Prostate gland (tissue), 2 donors: ENCODE measurements at regions of chr12 and their contacts with region 1.

Region 1: DNA sequence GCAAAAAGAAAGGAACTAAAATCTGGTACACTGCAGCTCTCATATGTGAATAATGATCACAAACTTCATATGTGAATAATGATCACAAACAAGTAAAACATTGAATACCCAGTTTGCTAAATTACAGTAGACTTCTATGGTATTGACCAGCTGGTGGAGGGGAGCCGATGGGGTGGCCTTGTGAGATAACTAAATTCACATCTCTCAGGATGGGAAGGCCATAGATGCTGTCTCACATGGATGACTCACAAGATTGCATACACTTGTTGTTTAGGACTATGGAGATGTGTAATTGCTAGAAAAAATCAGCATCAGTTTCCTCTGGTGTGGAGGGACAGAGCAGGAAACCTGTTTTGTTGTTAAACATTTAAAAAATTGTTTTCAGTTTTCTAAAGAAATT is 49.2 kb downstream of the ACACB start:
- DNase-seq: no peak
- H3K4me3 ChIP-seq: no peak overlapping the region
- H3K27ac ChIP-seq: no peak overlapping the region
- H3K4me1 ChIP-seq: no peaks in the 10 kb centered on the region
- H3K27me3 ChIP-seq: no peaks in the 10 kb centered on the region
- CTCF ChIP-seq: no peak
- POLR2A ChIP-seq: no peak

Region 2: DNA sequence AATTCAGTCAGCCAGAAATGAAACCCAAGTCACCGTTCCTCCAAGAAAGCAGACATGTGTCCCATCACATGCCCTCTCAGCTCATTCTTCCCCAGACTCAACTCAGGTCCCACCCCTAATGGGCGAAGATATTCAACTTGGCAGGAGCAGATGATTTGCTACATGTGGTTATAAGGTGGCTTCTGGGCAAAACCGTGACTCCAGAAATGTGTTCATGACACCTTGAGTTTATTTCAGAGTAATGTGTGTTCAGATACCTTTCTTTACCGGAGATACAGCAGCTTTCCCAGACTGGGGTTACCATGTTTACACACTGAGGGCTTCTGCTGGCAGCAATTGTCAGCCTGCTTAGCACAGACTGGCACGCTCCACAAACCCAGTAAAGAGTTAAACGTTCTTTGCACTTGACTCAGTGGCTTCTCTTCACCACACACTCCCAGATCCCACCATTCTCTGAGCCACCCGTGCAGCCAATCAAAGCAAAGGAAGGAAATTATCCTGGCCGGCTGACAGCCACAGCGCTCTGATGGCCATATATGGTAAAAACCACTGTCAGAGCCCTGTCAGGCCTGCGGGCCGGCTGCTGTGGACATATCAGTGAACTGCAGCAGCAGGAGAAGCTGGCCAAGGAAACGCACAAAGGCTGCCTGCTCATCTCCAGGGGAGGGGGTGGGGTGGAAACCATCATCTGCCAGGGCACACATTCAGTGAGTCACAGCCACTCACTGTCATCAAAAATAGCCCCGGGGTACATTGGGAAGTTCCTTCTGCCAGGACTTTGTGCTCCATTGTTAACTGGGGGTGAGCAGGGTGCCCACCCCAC is 474.2 kb before region 1 on chr12:
- intact Hi-C with region 1: loop called (anchors 10 kb)
- DNase-seq: peak; percentile 95
- H3K4me3 ChIP-seq: no peak overlapping the region
- H3K27ac ChIP-seq: peak overlapping the region; percentile 89 to 90
- H3K4me1 ChIP-seq: peaks cover 7% of the 10 kb centered on the region
- H3K27me3 ChIP-seq: no peaks in the 10 kb centered on the region
- CTCF ChIP-seq: peak in 2 of 4 experiments; percentile 54 to 81
- POLR2A ChIP-seq: peak; percentile 42

Region 3: DNA sequence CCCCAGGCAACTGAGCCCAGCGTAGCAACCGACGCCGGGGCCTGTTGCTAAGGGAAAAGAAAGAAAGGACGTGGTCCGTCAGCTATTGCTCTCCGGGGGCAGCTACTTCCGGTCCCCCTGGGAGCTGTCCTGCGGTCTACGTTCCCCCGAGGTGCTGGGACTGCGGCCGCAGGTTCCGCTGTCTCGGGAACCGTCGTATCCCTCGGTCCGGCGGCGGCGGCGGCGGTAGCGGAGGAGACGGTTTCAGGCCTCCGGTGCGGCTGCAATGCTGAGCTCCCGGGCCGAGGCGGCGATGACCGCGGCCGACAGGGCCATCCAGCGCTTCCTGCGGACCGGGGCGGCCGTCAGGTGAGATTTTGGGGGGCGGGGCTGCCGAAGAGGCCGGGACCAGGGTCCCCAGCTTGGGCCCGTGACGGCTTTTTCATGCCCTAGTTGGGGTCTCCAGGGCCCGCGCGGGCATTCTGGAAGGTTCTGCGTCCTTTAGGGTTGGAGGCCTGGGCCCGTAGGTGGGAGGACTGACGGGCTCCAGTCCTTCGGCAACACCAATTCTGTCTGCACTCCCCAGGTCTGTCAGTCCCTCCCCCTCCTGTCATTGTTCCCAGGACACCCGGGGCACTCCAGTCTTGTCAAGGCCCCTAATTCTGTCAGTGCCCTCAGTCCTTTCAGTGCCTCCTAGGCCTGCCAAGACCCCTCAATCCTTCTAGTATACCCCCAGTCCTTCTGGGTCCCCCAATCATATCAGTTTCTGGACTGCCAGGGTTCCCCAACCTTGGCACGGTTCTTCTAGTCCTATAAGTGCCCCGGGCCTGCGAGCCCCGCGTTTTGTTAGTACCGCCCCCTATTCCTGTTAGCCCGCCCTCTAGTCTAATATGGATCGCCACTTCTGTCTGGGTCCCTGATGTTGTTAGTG is 112.9 kb before region 1 on chr12 and contains the start of gene USP30:
- intact Hi-C with region 1: no loop called
- DNase-seq: peak; percentile 70
- H3K4me3 ChIP-seq: peak within 1 kb of the TSS; percentile 77 to 80
- H3K27ac ChIP-seq: peak within 1 kb of the TSS; percentile 83 to 87
- H3K4me1 ChIP-seq: no peaks in the 10 kb centered on the region
- H3K27me3 ChIP-seq: no peaks in the 10 kb centered on the region
- CTCF ChIP-seq: peak in 2 of 4 experiments; percentile 5 to 23
- POLR2A ChIP-seq: peak; percentile 31
- total RNA-seq, gene USP30: 18.0 to 30.1 TPM

Region 4: DNA sequence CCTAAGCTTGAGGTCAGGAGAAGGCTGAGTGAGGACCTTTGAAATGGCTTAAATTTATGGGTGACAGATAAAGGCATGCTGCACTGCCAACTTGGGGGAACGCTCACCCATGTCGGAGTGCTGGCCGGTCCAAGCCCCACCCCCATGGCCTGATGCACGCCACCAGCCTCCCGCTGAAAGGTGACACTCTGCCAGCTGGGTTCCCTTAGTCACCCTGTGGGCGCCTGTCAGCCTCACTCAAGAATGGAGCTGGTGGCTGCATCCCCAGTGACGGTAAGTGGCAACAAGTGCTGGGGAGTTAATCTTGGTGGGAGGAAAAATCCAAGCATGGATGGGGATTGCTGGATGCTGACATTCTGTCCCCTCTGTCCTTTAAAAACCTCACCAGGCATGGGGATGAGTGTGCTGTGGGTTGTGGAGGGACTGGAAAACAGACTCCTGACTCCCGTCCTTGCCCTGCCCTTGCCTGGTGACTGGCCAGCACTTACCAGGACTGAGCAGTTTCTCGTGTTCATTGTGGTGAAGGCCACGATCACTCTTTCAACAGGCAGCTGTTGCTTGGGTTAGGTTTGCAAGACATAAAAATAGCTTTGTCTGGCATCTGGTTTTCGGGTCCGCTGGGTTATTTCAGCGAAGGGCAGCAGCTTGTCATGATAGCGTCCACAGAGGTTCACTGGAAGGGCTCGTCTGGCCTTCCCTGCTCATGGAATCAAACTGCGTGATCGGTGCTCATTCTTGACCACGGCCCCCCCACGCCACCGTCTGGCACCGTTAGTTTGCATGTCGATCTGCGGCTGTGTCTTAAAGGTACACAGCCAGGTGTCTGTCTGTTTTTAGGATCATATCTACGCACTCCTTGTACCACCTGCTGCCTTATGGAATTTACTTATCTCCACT is 34.2 kb before region 1 on chr12:
- intact Hi-C with region 1: no loop called
- DNase-seq: no peak
- H3K4me3 ChIP-seq: no peak overlapping the region
- H3K27ac ChIP-seq: no peak overlapping the region
- H3K4me1 ChIP-seq: no peaks in the 10 kb centered on the region
- H3K27me3 ChIP-seq: no peaks in the 10 kb centered on the region
- CTCF ChIP-seq: no peak
- POLR2A ChIP-seq: no peak